ENCODE measurements at regions of chr17 and their contacts with region 1.

Region 1: GRCh38 chr17:78852709-78853121 is 12.1 kb upstream of the USP36 start:
- DNase-seq: peak; percentile 29
- ATAC-seq: peak; percentile 70
- H3K4me3 ChIP-seq: no peak overlapping the region
- H3K27ac ChIP-seq: no peak overlapping the region
- H3K4me1 ChIP-seq: no peaks in the 10 kb centered on the region
- H3K27me3 ChIP-seq: no peaks in the 10 kb centered on the region
- CTCF ChIP-seq: peak; percentile 69

Region 2: GRCh38 chr17:78781948-78782916 is 70.5 kb before region 1 on chr17 and contains the start of gene CYTH1:
- CTCF ChIA-PET with region 1: no interaction called
- POLR2A ChIA-PET with region 1: no interaction called
- intact Hi-C with region 1: no loop called
- DNase-seq: peak; percentile 95
- ATAC-seq: peak; percentile 70
- H3K4me3 ChIP-seq: peak within 1 kb of the TSS; percentile 96
- H3K27ac ChIP-seq: peak within 1 kb of the TSS; percentile 58
- H3K4me1 ChIP-seq: peaks cover 14% of the 10 kb centered on the region
- H3K27me3 ChIP-seq: no peaks in the 10 kb centered on the region
- CTCF ChIP-seq: no peak
- total RNA-seq, gene CYTH1: 29.7 and 37.7 TPM in 2 replicates

Region 3: DNA sequence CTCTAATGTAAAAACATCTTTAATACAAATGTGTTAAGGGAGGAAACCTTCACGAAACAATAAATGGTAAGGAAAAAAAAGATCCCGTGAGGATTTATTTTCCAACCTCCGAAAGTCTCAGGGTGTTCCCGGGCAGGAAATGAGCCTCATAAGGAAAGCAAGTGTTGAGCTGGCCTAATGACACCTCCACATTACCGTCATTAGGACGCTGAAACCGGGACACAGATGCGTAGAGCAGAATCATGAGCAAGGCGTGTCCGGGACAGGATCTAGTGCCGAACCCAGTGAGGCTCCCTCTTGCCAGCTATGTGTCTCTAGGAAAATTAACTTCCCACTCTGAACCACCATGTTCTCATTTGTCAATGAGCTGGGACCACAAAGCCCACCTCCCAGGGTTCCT is 47.9 kb before region 1 on chr17:
- CTCF ChIA-PET with region 1: no interaction called
- POLR2A ChIA-PET with region 1: interaction called, 19 read pairs
- intact Hi-C with region 1: no loop called
- DNase-seq: no peak
- ATAC-seq: no peak
- H3K4me3 ChIP-seq: no peak overlapping the region
- H3K27ac ChIP-seq: no peak overlapping the region
- H3K4me1 ChIP-seq: no peaks in the 10 kb centered on the region
- H3K27me3 ChIP-seq: no peaks in the 10 kb centered on the region
- CTCF ChIP-seq: no peak

Region 4: DNA sequence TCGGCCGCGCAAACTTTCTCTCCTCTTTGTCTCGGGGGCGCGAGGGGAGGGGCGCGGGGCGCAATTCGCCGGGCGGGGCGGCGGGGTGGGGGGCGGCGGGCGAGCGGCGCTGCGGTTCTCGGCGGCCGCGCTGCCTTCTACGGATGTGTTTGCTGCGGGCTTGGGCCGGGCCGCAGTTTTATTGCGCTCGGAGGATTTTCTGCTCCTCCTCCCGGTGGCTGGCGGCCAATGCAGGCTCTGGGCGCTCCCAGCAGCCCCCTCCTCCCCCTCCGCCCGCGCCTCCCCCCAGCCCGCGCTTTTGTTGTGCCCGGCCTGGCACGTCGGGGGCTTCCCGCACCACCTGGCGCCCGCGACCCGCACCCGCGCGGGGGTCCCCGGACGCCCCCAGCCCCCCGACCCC is 72.5 kb after region 1 on chr17 and contains the start of gene TIMP2:
- CTCF ChIA-PET with region 1: no interaction called
- POLR2A ChIA-PET with region 1: interaction called, 31 read pairs
- intact Hi-C with region 1: no loop called
- DNase-seq: peak; percentile 86
- ATAC-seq: peak; percentile 56
- H3K4me3 ChIP-seq: peak within 1 kb of the TSS; percentile 85
- H3K27ac ChIP-seq: no peak within 1 kb of the TSS
- H3K4me1 ChIP-seq: peaks cover 17% of the 10 kb centered on the region
- H3K27me3 ChIP-seq: no peaks in the 10 kb centered on the region
- CTCF ChIP-seq: no peak
- total RNA-seq, gene TIMP2: 60.1 and 62.5 TPM in 2 replicates